Left cardiac atrium (tissue), 4 donors: ENCODE measurements at regions of chr11 and their contacts with region 1.

Region 1: GRCh38 chr11:122505304-122506006 is 150.1 kb upstream of the UBASH3B start:
- DNase-seq: peak; percentile 83
- ATAC-seq: peak; percentile 99

Region 2: GRCh38 chr11:121655537-121656327 is 849.7 kb before region 1 on chr11:
- intact Hi-C with region 1: loop called in 1 of 2 experiments (anchors 1 kb)
- DNase-seq: peak; percentile 88
- ATAC-seq: peak; percentile 95 to 96

Region 3: GRCh38 chr11:122020902-122021301 is 484.6 kb before region 1 on chr11:
- intact Hi-C with region 1: loop called in 1 of 2 experiments (anchors 5 kb)
- DNase-seq: no peak
- ATAC-seq: no peak

Region 4: DNA sequence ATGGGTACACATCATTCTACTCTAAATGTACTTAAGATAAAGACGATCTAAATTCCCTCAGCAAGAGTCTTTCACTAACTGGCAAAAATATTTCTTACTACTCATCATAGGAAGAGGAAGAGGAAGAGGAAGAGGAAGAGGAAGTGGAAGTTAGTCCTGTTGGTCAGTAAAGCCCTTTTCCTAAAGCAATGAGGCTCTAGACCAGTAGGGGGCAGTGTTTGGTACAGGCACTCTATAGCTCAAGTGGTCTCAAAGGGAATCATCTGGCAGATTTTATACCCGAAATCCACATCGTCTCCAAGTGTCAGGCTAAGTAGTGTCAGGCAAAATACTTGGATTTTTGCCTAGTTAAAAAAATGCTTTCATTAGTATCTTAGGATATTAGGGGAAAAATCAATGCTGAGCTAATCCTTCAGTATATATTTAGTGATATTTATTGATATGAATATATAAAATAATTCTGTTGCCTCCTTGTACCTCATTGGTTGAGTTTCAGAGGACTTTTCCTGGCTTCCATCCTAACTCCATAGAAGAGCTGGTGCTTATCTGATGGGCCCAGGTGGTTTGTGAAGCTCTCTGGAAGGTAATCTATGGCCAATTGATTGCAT is 397.2 kb before region 1 on chr11:
- intact Hi-C with region 1: loop called in 1 of 2 experiments (anchors 10 kb)
- DNase-seq: no peak
- ATAC-seq: peak in 1 of 2 donors; percentile 60

Region 5: GRCh38 chr11:122202951-122203456 is 302.5 kb before region 1 on chr11:
- intact Hi-C with region 1: no loop called
- DNase-seq: peak; percentile 68
- ATAC-seq: peak; percentile 88

Region 6: DNA sequence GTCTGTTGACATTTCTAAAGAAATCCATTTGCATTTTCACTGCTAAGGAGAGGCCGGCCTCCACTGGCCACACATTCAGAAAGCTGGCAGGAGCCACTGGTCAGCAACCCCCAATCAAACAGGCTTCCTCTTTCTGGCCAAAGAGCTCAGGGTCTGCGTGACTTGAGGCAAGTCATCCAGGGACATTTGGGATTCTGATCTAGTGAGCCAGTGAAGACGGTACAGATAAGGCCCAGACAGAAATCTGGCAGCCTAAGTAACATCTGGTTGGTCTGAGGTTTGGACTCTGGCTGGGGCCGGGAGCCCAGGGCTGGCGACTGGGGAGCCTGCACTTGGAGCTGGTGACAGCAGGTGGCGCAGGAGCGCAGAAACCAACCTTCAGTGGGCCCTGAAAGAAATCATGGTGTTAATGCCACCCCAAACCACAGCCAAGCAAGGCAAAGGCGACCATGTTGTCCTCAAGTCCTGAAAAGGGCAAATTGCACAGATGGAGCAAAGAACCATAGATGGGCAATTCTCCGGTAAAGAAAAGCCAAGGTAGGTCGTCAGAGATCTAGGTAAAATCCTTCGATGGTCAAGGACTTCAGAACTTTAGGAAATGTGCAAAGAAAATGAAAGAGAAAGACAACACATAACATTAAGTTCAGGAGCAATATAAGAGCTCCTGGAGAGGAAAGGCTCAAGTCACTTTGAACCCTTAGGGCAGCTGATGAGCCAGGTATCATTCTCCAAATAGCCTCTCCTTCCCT is 290.0 kb before region 1 on chr11:
- intact Hi-C with region 1: loop called (anchors 2 to 10 kb)
- DNase-seq: peak; percentile 85
- ATAC-seq: peak; percentile 97

Region 7: GRCh38 chr11:122293296-122294023 is 212.0 kb before region 1 on chr11:
- intact Hi-C with region 1: loop called (anchors 2 to 10 kb)
- DNase-seq: no peak
- ATAC-seq: peak; percentile 51 to 55